Breast epithelium (tissue), 4 donors: ENCODE measurements at regions of chr13 and their contacts with region 1.

Region 1: GRCh38 chr13:38321654-38322053 is 28.0 kb upstream of the UFM1 start:
- DNase-seq: no peak
- H3K4me3 ChIP-seq: no peak overlapping the region
- H3K27ac ChIP-seq: no peak overlapping the region
- H3K4me1 ChIP-seq: no peaks in the 10 kb centered on the region
- H3K27me3 ChIP-seq: no peaks in the 10 kb centered on the region
- CTCF ChIP-seq: no peak
- POLR2A ChIP-seq: no peak

Region 2: DNA sequence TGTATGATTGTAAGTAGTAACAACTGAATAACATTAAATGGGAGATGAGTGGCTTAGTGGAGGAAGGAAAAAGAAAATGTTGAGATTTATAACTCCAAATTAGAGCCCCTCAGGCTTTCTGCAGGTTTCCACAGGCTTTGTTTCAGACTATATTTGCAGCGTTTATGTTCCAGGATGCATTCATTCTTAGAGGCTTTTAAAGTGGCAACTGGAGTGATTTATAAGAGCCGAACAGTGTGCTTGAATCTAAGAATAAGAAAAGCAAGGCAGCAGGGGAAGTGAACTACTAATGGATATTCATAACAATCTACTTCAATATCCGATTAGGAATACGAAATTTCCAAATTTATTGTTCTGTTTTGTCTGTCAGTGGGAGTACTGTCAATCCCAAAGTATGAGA is 119.0 kb after region 1 on chr13:
- intact Hi-C with region 1: no loop called
- DNase-seq: no peak
- H3K4me3 ChIP-seq: no peak overlapping the region
- H3K27ac ChIP-seq: no peak overlapping the region
- H3K4me1 ChIP-seq: no peaks in the 10 kb centered on the region
- H3K27me3 ChIP-seq: no peaks in the 10 kb centered on the region
- CTCF ChIP-seq: no peak
- POLR2A ChIP-seq: no peak

Region 3: GRCh38 chr13:38577048-38577447 is 255.4 kb after region 1 on chr13:
- intact Hi-C with region 1: loop called (anchors 10 kb)
- DNase-seq: no peak
- H3K4me3 ChIP-seq: no peak overlapping the region
- H3K27ac ChIP-seq: no peak overlapping the region
- H3K4me1 ChIP-seq: no peaks in the 10 kb centered on the region
- H3K27me3 ChIP-seq: no peaks in the 10 kb centered on the region
- CTCF ChIP-seq: no peak
- POLR2A ChIP-seq: no peak